ENCODE measurements at regions of chr6 and their contacts with region 1.

Region 1: DNA sequence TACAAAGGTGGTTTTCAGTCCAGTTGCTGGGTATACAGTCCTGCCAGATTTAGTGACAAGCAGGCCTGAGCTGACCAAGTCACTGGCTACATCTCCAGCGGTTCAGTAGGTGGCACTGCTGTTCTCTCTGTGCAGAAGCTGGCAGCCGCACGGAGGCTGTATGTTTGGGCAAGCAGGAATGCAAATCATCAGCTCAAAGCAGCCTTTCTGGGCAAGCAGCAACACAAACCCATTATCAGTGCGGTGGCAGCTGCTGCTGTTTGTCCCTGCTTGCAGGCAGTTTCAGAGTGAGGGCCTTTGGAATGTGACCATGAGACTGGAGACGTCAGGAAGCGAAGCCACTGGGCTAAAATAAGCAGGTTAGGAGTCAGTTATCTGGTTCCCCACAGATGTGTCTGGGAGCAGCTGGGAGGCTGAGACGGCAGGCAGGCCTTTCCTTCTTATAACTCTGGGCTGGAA is 72.5 kb downstream of the TXLNB start:
- DNase-seq: peak; percentile 37 to 80 (median 55)
- H3K4me3 ChIP-seq: no peak overlapping the region
- H3K4me3 Mint-ChIP-seq: peak overlapping the region in 3 of 7 donors; percentile 40 to 81 (median 62)
- H3K27ac ChIP-seq: no peak overlapping the region
- H3K27ac Mint-ChIP-seq: peak overlapping the region in 7 of 8 donors; percentile 31 to 91 (median 85)
- H3K4me1 ChIP-seq: peaks cover 7% of the 10 kb centered on the region
- H3K4me1 Mint-ChIP-seq: peaks cover 8 to 12% (median 12%) of the 10 kb centered on the region in 3 donors
- H3K27me3 ChIP-seq: no peaks in the 10 kb centered on the region
- H3K27me3 Mint-ChIP-seq: no peaks in the 10 kb centered on the region

Region 2: GRCh38 chr6:139124887-139125672 is 94.2 kb before region 1 on chr6:
- CTCF ChIA-PET with region 1: interaction called, 29 read pairs
- POLR2A ChIA-PET with region 1: no interaction called
- DNase-seq: peak; percentile 48 to 88 (median 83)
- H3K4me3 ChIP-seq: peak overlapping the region; percentile 35
- H3K4me3 Mint-ChIP-seq: peak overlapping the region; percentile 42 to 80 (median 67)
- H3K27ac ChIP-seq: peak overlapping the region; percentile 10
- H3K27ac Mint-ChIP-seq: peak overlapping the region; percentile 83 to 97 (median 92)
- H3K4me1 ChIP-seq: peaks cover 49% of the 10 kb centered on the region
- H3K4me1 Mint-ChIP-seq: peaks cover 40 to 54% (median 49%) of the 10 kb centered on the region in 3 donors
- H3K27me3 ChIP-seq: no peaks in the 10 kb centered on the region
- H3K27me3 Mint-ChIP-seq: no peaks in the 10 kb centered on the region

Region 3: DNA sequence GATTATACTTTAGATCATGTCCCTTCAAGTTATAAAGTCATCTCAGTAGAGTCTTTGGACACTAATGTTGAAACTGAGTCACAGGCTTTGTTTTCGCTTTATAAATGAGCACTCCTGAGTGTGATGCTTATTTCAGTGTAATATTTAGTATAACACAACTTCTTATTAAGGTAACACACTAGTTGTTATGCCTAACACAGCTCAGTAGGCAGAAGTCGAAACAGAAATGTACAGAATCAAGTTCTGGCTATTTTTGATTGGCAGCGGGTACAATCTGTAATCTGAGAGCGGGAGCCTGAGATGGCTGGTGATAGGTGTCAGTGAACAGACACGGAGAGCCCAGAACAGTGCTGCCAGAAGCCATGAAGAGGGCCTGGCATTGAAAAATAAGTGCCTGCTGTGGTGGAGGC is 73.0 kb before region 1 on chr6:
- CTCF ChIA-PET with region 1: interaction called, 16 read pairs
- POLR2A ChIA-PET with region 1: no interaction called
- DNase-seq: no peak
- H3K4me3 ChIP-seq: peak overlapping the region; percentile 23
- H3K4me3 Mint-ChIP-seq: peak overlapping the region; percentile 60 to 81 (median 71)
- H3K27ac ChIP-seq: no peak overlapping the region
- H3K27ac Mint-ChIP-seq: peak overlapping the region; percentile 51 to 89 (median 82)
- H3K4me1 ChIP-seq: peaks cover 95% of the 10 kb centered on the region
- H3K4me1 Mint-ChIP-seq: peaks cover 92 to 97% (median 97%) of the 10 kb centered on the region in 3 donors
- H3K27me3 ChIP-seq: no peaks in the 10 kb centered on the region
- H3K27me3 Mint-ChIP-seq: peaks cover 0 to 2% of the 10 kb centered on the region in 2 donors

Region 4: DNA sequence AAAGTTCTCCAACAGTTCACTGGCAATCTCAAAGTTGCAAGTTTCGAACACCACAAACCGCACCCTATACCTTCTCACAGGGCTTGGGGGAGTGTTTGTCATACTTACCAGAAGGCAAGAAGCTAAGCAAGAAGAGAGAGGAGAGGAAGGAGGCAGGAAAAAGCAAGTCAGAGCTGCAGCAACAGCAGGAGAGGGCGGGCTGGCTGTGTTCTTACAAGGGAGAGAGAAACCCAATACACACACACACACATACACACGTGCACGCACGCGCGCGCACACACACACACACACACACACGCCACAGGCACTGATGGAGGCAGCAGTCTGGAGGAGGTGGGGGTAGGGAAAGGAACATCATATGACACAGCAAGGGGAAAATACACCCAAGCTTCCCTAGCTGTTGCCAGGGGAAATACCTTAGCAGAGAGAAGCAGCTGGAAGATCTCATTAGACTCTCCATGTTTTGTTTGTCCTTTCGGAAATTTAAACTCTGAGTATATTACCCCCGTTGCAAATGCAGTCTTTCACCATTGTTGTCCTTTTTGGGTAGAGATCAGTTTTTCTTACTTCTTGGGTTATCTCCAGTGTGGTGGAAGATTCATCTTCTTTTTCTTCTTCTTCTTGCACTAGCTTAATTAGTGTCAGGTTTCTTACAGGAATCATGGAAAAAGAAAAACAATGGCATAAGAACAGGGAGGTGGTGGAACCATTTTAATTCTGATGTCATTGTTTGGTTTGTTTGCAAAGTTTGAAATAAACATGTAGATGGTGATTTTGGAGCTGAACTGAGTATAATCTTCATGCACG is 72.7 kb after region 1 on chr6 and contains the start of gene TXLNB:
- CTCF ChIA-PET with region 1: interaction called, 21 read pairs
- POLR2A ChIA-PET with region 1: interaction called, 3 read pairs
- DNase-seq: peak; percentile 54 to 90 (median 82)
- H3K4me3 ChIP-seq: peak within 1 kb of the TSS; percentile 42
- H3K4me3 Mint-ChIP-seq: peak within 1 kb of the TSS; percentile 73 to 91 (median 85)
- H3K27ac ChIP-seq: peak within 1 kb of the TSS; percentile 77
- H3K27ac Mint-ChIP-seq: peak within 1 kb of the TSS; percentile 84 to 98 (median 96)
- H3K4me1 ChIP-seq: peaks cover 43% of the 10 kb centered on the region
- H3K4me1 Mint-ChIP-seq: peaks cover 60 to 81% (median 69%) of the 10 kb centered on the region in 3 donors
- H3K27me3 ChIP-seq: no peaks in the 10 kb centered on the region
- H3K27me3 Mint-ChIP-seq: peaks cover 0 to 2% of the 10 kb centered on the region in 2 donors
- total RNA-seq, gene TXLNB: 0.13 to 0.47 TPM

Region 5: DNA sequence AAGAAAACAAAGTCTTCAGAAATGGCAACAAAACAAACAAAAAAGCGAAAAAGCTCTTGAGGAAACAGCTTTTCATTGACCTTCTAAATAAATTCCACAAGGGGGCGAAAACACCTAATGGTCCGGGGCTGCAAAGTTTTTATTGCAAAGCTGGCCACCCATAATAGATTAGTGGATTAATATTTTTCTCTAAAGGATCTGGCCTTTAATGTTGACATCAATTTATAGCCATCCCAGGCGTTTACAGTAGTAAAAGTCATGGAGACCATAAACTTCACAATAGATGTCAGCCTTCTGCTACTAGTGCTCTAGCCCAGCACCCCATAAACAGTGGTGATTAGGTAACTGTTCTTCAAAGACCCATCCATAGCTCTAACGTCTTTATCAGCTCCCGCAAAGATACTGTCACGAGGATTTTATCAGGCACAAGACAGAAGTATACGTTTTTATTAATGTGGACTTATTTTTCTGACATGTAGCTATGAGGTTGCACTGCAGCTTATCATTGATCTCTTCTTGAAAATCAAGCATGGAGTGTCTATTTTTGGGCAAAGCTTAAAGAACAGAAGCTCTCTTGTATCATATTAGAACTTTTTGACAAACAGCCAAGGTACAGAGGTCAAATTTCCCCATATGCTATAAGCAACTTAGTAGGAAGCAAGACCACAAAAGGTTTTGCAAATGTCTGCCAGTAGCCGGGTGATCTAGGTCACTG is 150.4 kb after region 1 on chr6:
- CTCF ChIA-PET with region 1: interaction called, 88 read pairs
- POLR2A ChIA-PET with region 1: interaction called, 11 read pairs
- DNase-seq: peak in 2 of 5 donors; percentile 46 to 47
- H3K4me3 ChIP-seq: peak overlapping the region; percentile 23
- H3K4me3 Mint-ChIP-seq: peak overlapping the region; percentile 54 to 100 (median 84)
- H3K27ac ChIP-seq: no peak overlapping the region
- H3K27ac Mint-ChIP-seq: peak overlapping the region; percentile 65 to 100 (median 90)
- H3K4me1 ChIP-seq: peaks cover 38% of the 10 kb centered on the region
- H3K4me1 Mint-ChIP-seq: peaks cover 30 to 53% (median 42%) of the 10 kb centered on the region in 3 donors
- H3K27me3 ChIP-seq: no peaks in the 10 kb centered on the region
- H3K27me3 Mint-ChIP-seq: peaks cover 0 to 4% of the 10 kb centered on the region in 2 donors

Region 6: GRCh38 chr6:139508023-139508422 is 288.7 kb after region 1 on chr6:
- CTCF ChIA-PET with region 1: no interaction called
- POLR2A ChIA-PET with region 1: no interaction called
- DNase-seq: no peak
- H3K4me3 ChIP-seq: no peak overlapping the region
- H3K4me3 Mint-ChIP-seq: no peak overlapping the region
- H3K27ac ChIP-seq: no peak overlapping the region
- H3K27ac Mint-ChIP-seq: no peak overlapping the region
- H3K4me1 ChIP-seq: no peaks in the 10 kb centered on the region
- H3K4me1 Mint-ChIP-seq: no peaks in the 10 kb centered on the region
- H3K27me3 ChIP-seq: no peaks in the 10 kb centered on the region
- H3K27me3 Mint-ChIP-seq: peaks cover 0 to 6% of the 10 kb centered on the region in 2 donors